ENCODE measurements at regions of chr1 and their contacts with region 1.

Region 1: DNA sequence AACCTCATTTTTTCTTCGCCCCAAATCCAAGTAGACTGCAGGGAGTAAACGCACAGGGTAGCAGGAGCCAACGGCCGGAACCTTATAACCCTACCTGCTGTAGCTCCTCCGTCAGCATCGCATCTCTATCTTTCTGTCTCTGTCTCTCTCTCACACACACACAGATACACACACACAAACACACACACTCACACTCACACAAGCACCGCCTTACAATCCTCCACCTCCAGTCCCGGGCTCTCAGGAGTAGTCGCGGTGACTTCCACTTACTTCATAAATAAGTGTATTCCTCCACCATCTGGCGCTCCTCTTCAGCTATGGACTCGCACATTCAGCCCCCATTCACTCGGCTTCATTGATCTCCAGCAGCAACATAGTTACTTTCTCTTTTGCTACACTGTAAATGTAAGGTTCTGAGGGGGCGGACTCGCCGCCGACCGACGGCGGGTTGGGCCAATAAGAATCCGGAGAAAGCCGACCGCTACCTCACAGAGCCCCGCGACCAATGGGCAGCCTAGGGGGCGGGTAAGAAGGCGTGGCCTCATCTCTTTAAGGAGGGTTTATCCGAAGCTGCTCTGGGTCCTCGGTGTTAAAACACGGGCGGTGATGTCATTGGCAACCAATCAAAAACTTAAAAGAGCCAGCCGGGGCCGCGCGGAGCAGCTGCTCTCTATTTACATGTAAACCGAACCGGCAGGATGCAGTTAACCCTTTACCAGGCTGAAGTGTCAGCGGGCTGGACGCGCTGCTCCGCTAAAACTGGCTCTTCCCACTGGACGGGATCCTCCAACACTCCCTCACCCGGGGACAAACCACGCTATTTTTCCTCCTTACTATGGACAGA is at the start of gene DUSP10:
- DNase-seq: peak; percentile 99 to 100 (median 99)
- H3K4me3 ChIP-seq: peak within 1 kb of the TSS; percentile 59 to 84 (median 80)
- H3K27ac ChIP-seq: peak within 1 kb of the TSS; percentile 88 to 98 (median 98)
- H3K4me1 ChIP-seq: peaks cover 0 to 13% of the 10 kb centered on the region in 2 donors
- H3K27me3 ChIP-seq: no peaks in the 10 kb centered on the region
- CTCF ChIP-seq: no peak
- POLR2A ChIP-seq: peak; percentile 92 to 98
- total RNA-seq, gene DUSP10: 3.7 to 22.1 (median 7.1) TPM

Region 2: GRCh38 chr1:221886743-221887413 is 144.9 kb after region 1 on chr1:
- intact Hi-C with region 1: loop called in 1 of 2 experiments (anchors 10 kb)
- DNase-seq: peak; percentile 68 to 90 (median 87)
- H3K4me3 ChIP-seq: no peak overlapping the region
- H3K27ac ChIP-seq: no peak overlapping the region
- H3K4me1 ChIP-seq: no peaks in the 10 kb centered on the region
- H3K27me3 ChIP-seq: no peaks in the 10 kb centered on the region
- CTCF ChIP-seq: no peak
- POLR2A ChIP-seq: no peak